ENCODE measurements at regions of chr3 and their contacts with region 1.

Region 1: DNA sequence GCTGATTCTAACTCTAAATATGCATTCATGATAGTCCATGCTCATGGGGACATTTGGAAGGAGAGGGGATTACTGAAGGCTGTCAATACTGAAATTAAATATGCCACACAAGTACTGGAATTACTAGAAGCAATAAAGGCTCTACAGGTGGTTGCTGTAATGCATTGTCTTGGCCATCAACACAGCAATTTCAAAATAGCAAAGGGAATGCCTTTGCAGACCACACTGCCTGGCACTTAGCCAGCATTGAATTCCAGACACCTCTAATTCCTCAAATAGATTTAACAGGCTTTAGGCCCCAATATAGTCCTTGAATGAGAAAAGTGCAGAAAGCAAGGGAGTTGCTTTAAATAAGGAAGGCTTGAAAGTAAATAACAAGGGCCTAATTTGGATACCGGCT is 115.8 kb upstream of the PLCL2 start:
- DNase-seq: no peak
- ATAC-seq: no peak

Region 2: GRCh38 chr3:16132928-16133327 is 636.0 kb before region 1 on chr3:
- intact Hi-C with region 1: no loop called
- DNase-seq: no peak
- ATAC-seq: peak; percentile 69

Region 3: GRCh38 chr3:16723978-16724377 is 45.0 kb before region 1 on chr3:
- intact Hi-C with region 1: no loop called
- DNase-seq: no peak
- ATAC-seq: no peak

Region 4: DNA sequence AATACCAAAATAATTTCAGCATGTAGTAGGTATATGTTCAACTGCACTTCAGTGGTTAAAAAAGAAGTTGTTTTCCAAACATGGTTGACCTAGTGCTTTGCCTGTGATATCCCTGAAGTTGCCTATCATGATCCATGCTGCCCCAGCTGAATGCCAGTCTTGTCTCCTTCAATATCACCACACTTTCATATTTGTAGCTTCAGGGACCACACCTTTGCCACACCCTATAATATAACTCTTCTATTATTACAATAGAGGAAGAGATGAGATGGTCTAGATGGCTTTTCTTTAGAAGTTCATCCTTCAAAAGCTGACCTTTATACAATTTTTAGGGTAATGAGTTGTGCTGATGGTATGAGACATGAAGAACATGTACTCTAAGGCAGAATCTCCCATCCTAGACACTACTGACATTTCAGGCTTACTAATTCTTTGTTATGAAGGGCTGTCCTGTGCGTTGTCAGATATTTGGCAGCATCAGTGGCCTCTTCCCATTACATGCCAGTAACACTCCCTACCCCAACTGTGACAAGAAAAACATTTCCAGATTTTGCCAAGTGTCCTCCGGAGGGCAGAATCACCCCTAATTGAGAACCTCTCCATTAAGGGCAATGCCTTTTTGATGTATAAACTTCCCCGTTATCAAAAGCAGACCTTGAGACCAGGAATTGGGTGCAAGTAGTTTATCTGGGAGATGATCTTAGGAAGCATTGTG is 39.6 kb after region 1 on chr3:
- intact Hi-C with region 1: no loop called
- DNase-seq: no peak
- ATAC-seq: peak; percentile 28

Region 5: GRCh38 chr3:16838561-16838960 is 69.6 kb after region 1 on chr3:
- intact Hi-C with region 1: loop called (anchors 5 kb)
- DNase-seq: no peak
- ATAC-seq: peak; percentile 55

Region 6: GRCh38 chr3:16993227-16993626 is 224.3 kb after region 1 on chr3:
- intact Hi-C with region 1: no loop called
- DNase-seq: no peak
- ATAC-seq: no peak

Region 7: GRCh38 chr3:17032407-17033034 is 263.6 kb after region 1 on chr3:
- intact Hi-C with region 1: loop called (anchors 10 kb)
- DNase-seq: no peak
- ATAC-seq: peak; percentile 50

Measured in Right ventricle myocardium inferior (tissue), 1 donor.